Calu3 (cell line): ENCODE measurements at regions of chr6 and their contacts with region 1.

Region 1: GRCh38 chr6:52801188-52801841 is 2.3 kb downstream of the GSTA1 start:
- DNase-seq: no peak
- H3K4me3 Mint-ChIP-seq: no peak overlapping the region
- H3K27ac Mint-ChIP-seq: no peak overlapping the region
- H3K4me1 Mint-ChIP-seq: peaks cover 20% of the 10 kb centered on the region
- H3K27me3 Mint-ChIP-seq: peaks cover 30% of the 10 kb centered on the region
- CTCF ChIP-seq: no peak

Region 2: GRCh38 chr6:52724406-52725121 is 76.8 kb before region 1 on chr6:
- CTCF ChIA-PET with region 1: interaction called, 3 read pairs
- intact Hi-C with region 1: loop called (anchors 2 kb)
- DNase-seq: peak; percentile 78
- H3K4me3 Mint-ChIP-seq: no peak overlapping the region
- H3K27ac Mint-ChIP-seq: no peak overlapping the region
- H3K4me1 Mint-ChIP-seq: peaks cover 23% of the 10 kb centered on the region
- H3K27me3 Mint-ChIP-seq: no peaks in the 10 kb centered on the region
- CTCF ChIP-seq: peak; percentile 66

Region 3: GRCh38 chr6:52759085-52759484 is 42.2 kb before region 1 on chr6:
- CTCF ChIA-PET with region 1: interaction called, 13 read pairs
- intact Hi-C with region 1: no loop called
- DNase-seq: no peak
- H3K4me3 Mint-ChIP-seq: no peak overlapping the region
- H3K27ac Mint-ChIP-seq: no peak overlapping the region
- H3K4me1 Mint-ChIP-seq: peaks cover 18% of the 10 kb centered on the region
- H3K27me3 Mint-ChIP-seq: peaks cover 58% of the 10 kb centered on the region
- CTCF ChIP-seq: no peak

Region 4: GRCh38 chr6:52995913-52996645 is 194.8 kb after region 1 on chr6:
- CTCF ChIA-PET with region 1: no interaction called
- intact Hi-C with region 1: no loop called
- DNase-seq: peak; percentile 39
- H3K4me3 Mint-ChIP-seq: peak overlapping the region; percentile 84
- H3K27ac Mint-ChIP-seq: peak overlapping the region; percentile 88
- H3K4me1 Mint-ChIP-seq: peaks cover 20% of the 10 kb centered on the region
- H3K27me3 Mint-ChIP-seq: no peaks in the 10 kb centered on the region
- CTCF ChIP-seq: no peak